ENCODE measurements at regions of chr2 and their contacts with region 1.

Region 1: DNA sequence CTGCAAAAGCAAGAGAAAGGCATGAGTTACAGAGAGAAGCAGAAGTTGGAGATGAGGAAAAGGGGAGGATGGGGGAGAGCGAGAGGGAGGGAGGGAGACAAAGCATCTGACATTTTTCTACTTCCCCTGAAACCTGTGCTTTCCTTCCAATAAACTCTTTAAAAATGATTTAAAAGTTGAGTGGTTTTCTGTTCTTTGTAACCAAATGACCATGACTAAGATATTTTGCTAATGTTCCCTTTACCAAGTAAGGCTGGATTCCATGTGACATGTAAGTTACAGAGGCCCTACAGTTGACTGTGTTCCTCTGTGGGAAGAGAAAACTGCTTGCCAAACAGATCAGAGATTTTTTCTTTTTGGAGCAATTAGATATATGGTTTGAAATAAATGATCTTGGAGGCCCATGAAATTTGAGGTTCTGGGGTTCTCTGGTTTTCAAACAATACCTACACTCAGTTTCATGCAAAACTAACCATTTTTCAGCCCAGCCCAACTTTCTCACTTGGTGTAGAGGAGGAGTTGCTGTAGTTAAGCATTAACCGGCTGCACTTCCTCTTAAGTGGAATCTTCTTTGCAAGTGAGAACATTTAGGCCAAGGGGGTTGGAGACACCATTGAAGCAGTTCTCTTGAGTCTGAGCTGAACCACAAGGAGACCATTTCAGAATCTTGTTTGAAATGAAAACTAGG is 34.5 kb downstream of the INSIG2 start:
- H3K4me3 Mint-ChIP-seq: no peak overlapping the region
- H3K27ac Mint-ChIP-seq: peak overlapping the region; percentile 93
- H3K4me1 Mint-ChIP-seq: peaks cover 93% of the 10 kb centered on the region
- H3K27me3 Mint-ChIP-seq: no peaks in the 10 kb centered on the region

Region 2: DNA sequence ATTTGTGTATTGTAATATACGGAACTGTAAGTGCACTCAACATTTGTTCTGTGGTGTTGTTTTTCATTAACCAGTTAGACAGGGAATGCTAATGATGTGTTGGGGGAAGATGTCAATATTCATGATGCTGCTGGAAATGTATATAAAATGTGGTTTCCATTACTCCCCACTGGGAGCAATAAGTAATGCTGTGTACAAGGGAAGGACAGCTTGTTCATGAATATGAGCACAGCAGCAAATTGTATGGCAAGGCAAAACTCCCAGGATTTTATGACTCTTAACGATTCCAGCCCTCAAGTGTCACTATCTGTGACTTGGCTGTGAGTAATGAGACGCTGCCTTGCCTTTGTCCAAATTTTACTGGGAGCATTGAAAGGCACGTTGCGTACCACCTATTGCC is 620.6 kb before region 1 on chr2:
- intact Hi-C with region 1: no loop called
- H3K4me3 Mint-ChIP-seq: no peak overlapping the region
- H3K27ac Mint-ChIP-seq: no peak overlapping the region
- H3K4me1 Mint-ChIP-seq: no peaks in the 10 kb centered on the region
- H3K27me3 Mint-ChIP-seq: no peaks in the 10 kb centered on the region

Region 3: DNA sequence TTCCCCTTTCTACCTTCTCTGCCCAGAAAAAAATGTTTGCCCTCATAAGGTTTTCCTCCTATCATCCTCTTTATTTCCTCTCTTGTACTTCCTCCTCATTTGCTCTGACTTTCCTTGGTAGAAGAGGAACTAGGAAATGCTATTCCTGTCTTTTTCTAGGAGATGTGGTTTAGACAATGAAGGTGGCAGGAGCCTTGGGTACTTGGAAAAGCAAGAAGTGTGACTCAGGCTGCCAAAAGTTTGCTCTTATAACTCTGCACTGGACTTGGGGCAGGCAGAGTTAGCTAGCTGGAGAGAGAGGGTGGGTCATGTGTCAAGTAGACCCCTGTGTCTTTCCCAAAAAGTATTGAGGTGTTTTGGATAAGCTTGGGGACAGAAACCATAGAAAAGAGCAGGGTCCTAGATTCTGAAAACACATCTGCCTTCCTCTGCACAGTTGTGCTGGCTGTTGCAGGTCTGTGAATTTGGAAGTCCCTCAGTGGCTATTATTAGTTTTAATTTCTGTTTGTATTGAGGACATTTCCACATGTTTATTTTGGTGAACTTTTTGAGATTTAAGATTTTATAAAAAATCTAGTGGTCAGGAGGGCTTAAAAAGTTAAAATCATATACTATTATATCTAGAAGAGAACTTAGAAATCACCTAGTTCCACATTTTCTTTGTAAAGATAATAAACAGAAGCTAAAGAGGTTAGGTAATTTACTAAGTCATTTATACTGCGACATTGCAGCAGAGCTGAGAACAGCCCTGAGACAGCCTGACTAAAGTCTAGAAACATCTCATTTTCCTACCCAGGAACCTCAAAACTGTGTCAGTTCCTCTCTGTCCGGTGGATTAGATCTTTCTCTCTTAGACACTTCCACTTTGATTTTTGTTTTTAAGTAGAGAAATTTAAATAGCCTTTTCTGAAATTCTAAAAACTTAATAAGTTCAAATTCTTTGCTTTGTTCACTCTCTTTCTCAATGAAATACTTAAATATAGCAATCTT is 18.5 kb before region 1 on chr2:
- intact Hi-C with region 1: loop called (anchors 2 kb)
- H3K4me3 Mint-ChIP-seq: peak overlapping the region; percentile 0
- H3K27ac Mint-ChIP-seq: peak overlapping the region; percentile 83
- H3K4me1 Mint-ChIP-seq: peaks cover 47% of the 10 kb centered on the region
- H3K27me3 Mint-ChIP-seq: no peaks in the 10 kb centered on the region

Region 4: GRCh38 chr2:118169359-118170007 is 46.7 kb after region 1 on chr2:
- intact Hi-C with region 1: loop called (anchors 10 kb)
- H3K4me3 Mint-ChIP-seq: peak overlapping the region; percentile 17
- H3K27ac Mint-ChIP-seq: no peak overlapping the region
- H3K4me1 Mint-ChIP-seq: no peaks in the 10 kb centered on the region
- H3K27me3 Mint-ChIP-seq: peaks cover 2% of the 10 kb centered on the region